ENCODE measurements at regions of chr2 and their contacts with region 1.

Region 1: GRCh38 chr2:172172513-172173173 is 69.9 kb upstream of the DLX2 start:
- DNase-seq: peak; percentile 89
- H3K4me3 Mint-ChIP-seq: peak overlapping the region; percentile 80
- H3K27ac Mint-ChIP-seq: peak overlapping the region; percentile 39
- H3K4me1 Mint-ChIP-seq: peaks cover 31% of the 10 kb centered on the region
- H3K27me3 Mint-ChIP-seq: no peaks in the 10 kb centered on the region
- CTCF ChIP-seq: peak; percentile 73

Region 2: GRCh38 chr2:170984079-170984478 is 1188.6 kb before region 1 on chr2:
- CTCF ChIA-PET with region 1: no interaction called
- intact Hi-C with region 1: no loop called
- DNase-seq: no peak
- H3K4me3 Mint-ChIP-seq: no peak overlapping the region
- H3K27ac Mint-ChIP-seq: peak overlapping the region; percentile 20
- H3K4me1 Mint-ChIP-seq: peaks cover 15% of the 10 kb centered on the region
- H3K27me3 Mint-ChIP-seq: peaks cover 34% of the 10 kb centered on the region
- CTCF ChIP-seq: no peak

Region 3: GRCh38 chr2:172226244-172227061 is 53.8 kb after region 1 on chr2:
- CTCF ChIA-PET with region 1: interaction called, 9 read pairs
- intact Hi-C with region 1: loop called (anchors 2 kb)
- DNase-seq: peak; percentile 68
- H3K4me3 Mint-ChIP-seq: no peak overlapping the region
- H3K27ac Mint-ChIP-seq: no peak overlapping the region
- H3K4me1 Mint-ChIP-seq: peaks cover 31% of the 10 kb centered on the region
- H3K27me3 Mint-ChIP-seq: no peaks in the 10 kb centered on the region
- CTCF ChIP-seq: peak; percentile 39

Region 4: DNA sequence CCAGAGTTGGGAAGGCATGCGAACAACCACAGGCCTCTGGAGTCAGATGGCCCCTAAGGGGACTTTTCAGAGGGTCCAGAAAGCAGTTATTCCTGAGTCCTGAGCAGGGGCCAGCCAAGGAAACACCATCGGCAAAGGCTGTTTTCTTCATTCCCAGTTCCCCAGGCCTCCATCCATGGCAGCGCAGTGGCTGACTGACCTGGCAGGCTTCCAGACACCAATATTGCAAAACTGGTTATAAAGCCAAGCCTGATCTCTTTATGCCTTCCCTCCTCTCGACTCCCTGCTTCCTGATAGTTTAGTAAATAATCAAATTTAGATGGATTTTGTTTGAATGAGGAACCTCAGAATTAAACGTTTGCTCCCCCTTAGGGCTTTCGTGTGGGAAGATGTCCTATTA is 121.3 kb after region 1 on chr2:
- CTCF ChIA-PET with region 1: no interaction called
- intact Hi-C with region 1: no loop called
- DNase-seq: peak; percentile 70
- H3K4me3 Mint-ChIP-seq: no peak overlapping the region
- H3K27ac Mint-ChIP-seq: no peak overlapping the region
- H3K4me1 Mint-ChIP-seq: peaks cover 9% of the 10 kb centered on the region
- H3K27me3 Mint-ChIP-seq: peaks cover 17% of the 10 kb centered on the region
- CTCF ChIP-seq: no peak

Region 5: DNA sequence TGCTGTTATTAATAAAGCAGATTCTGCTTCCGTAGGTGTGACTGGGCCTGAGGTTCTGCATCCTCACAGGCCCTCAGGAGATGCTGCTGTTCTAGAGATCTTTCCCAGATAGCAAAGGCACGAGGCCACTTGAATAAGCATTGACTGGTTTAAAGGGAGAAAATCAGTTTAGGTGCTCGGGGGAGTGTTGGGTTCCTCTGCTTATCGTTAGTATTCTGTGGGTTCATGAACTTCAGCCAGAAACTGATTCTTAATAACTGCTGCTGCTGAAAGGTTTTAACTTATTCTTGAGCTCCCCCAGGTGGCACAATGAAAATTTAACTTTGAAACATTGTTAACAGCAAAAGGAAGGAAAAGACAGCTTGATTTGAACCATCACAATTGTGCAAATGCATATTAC is 311.6 kb after region 1 on chr2:
- CTCF ChIA-PET with region 1: interaction called, 3 read pairs
- intact Hi-C with region 1: loop called (anchors 5 kb)
- DNase-seq: no peak
- H3K4me3 Mint-ChIP-seq: no peak overlapping the region
- H3K27ac Mint-ChIP-seq: no peak overlapping the region
- H3K4me1 Mint-ChIP-seq: peaks cover 19% of the 10 kb centered on the region
- H3K27me3 Mint-ChIP-seq: no peaks in the 10 kb centered on the region
- CTCF ChIP-seq: peak; percentile 15

Region 6: GRCh38 chr2:172710584-172711024 is 538.0 kb after region 1 on chr2:
- CTCF ChIA-PET with region 1: no interaction called
- intact Hi-C with region 1: loop called (anchors 5 kb)
- DNase-seq: peak; percentile 65
- H3K4me3 Mint-ChIP-seq: no peak overlapping the region
- H3K27ac Mint-ChIP-seq: no peak overlapping the region
- H3K4me1 Mint-ChIP-seq: no peaks in the 10 kb centered on the region
- H3K27me3 Mint-ChIP-seq: peaks cover 29% of the 10 kb centered on the region
- CTCF ChIP-seq: peak; percentile 48

Measured in Calu3 (cell line).